ENCODE measurements at regions of chr17 and their contacts with region 1.

Region 1: DNA sequence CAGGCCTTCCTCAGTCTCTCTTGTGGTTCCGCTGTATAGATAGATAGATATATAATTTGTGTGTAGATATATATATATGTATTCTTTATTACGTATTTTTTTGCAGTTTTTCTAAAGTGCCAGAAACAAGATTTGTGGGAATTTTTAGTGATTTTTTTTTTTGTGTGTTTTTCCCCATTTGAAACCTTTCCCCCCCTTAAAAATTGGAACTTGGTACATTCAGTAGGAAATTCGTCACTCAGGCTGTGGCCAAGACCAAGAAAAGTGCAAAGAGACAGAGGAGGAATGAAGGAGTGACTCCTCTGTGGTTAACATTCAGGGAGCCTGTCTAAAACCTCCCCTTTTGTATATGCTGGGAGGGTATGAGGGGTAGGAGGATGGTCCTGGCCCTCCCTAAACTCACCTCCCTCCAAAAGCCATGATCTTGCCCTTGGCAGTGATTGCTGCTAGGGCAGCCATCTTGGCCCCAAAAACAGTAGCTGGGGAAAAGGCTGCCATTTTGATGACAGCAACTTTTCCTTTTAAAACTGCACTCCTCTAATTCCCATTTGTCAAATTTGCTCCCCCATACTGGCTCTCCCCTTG is 15.2 kb downstream of the CHRNB1 start:
- DNase-seq: no peak
- H3K4me3 ChIP-seq: no peak overlapping the region
- H3K27ac ChIP-seq: no peak overlapping the region
- H3K4me1 ChIP-seq: peaks cover 2% of the 10 kb centered on the region
- H3K27me3 ChIP-seq: no peaks in the 10 kb centered on the region
- CTCF ChIP-seq: no peak
- EP300 ChIP-seq: no peak
- POLR2A ChIP-seq: no peak

Region 2: GRCh38 chr17:7435221-7435675 is 24.8 kb before region 1 on chr17 and contains the start of gene TMEM102:
- intact Hi-C with region 1: loop called in 1 of 4 experiments (anchors 1 kb)
- DNase-seq: peak; percentile 78 to 88 (median 84)
- H3K4me3 ChIP-seq: peak within 1 kb of the TSS; percentile 27
- H3K27ac ChIP-seq: no peak within 1 kb of the TSS
- H3K4me1 ChIP-seq: peaks cover 4% of the 10 kb centered on the region
- H3K27me3 ChIP-seq: no peaks in the 10 kb centered on the region
- CTCF ChIP-seq: no peak
- EP300 ChIP-seq: no peak
- POLR2A ChIP-seq: no peak
- total RNA-seq, gene TMEM102: 0.43 to 8.3 (median 1.5) TPM

Measured in ovary (tissue), 10 donors.